Psoas muscle (tissue), 8 donors: ENCODE measurements at regions of chr5 and their contacts with region 1.

Region 1: GRCh38 chr5:93607367-93608258 is 24.6 kb downstream of the NR2F1 start:
- DNase-seq: no peak
- ATAC-seq: peak in 3 of 4 donors; percentile 64 to 81 (median 74)
- H3K4me3 ChIP-seq: peak overlapping the region; percentile 37
- H3K27ac ChIP-seq: no peak overlapping the region
- H3K4me1 ChIP-seq: peaks cover 9% of the 10 kb centered on the region
- H3K27me3 ChIP-seq: peaks cover 7 to 97% (median 26%) of the 10 kb centered on the region in 3 donors
- CTCF ChIP-seq: peak; percentile 42

Region 2: GRCh38 chr5:93800988-93801811 is 193.6 kb after region 1 on chr5:
- intact Hi-C with region 1: loop called in 1 of 2 experiments (anchors 5 kb)
- DNase-seq: peak in 1 of 2 donors; percentile 13
- ATAC-seq: peak in 3 of 4 donors; percentile 46 to 76 (median 48)
- H3K4me3 ChIP-seq: no peak overlapping the region
- H3K27ac ChIP-seq: no peak overlapping the region
- H3K4me1 ChIP-seq: peaks cover 4% of the 10 kb centered on the region
- H3K27me3 ChIP-seq: no peaks in the 10 kb centered on the region
- CTCF ChIP-seq: peak; percentile 75

Region 3: GRCh38 chr5:94111209-94112004 is 503.8 kb after region 1 on chr5:
- intact Hi-C with region 1: loop called in 1 of 2 experiments (anchors 10 kb)
- DNase-seq: peak; percentile 94 to 96
- ATAC-seq: peak; percentile 97 to 99 (median 99)
- H3K4me3 ChIP-seq: peak overlapping the region; percentile 82
- H3K27ac ChIP-seq: peak overlapping the region; percentile 87
- H3K4me1 ChIP-seq: peaks cover 6% of the 10 kb centered on the region
- H3K27me3 ChIP-seq: peaks cover 0 to 2% (median 0%) of the 10 kb centered on the region in 3 donors
- CTCF ChIP-seq: no peak